ENCODE measurements at regions of chr2 and their contacts with region 1.

Region 1: GRCh38 chr2:172102391-172103278 is at the start of gene DLX2:
- H3K4me3 ChIP-seq: peak within 1 kb of the TSS; percentile 67
- H3K27ac ChIP-seq: peak within 1 kb of the TSS; percentile 99
- H3K4me1 ChIP-seq: peaks cover 14% of the 10 kb centered on the region
- CTCF ChIP-seq: peak; percentile 57; the same call in 1 of the 2 replicates

Region 2: GRCh38 chr2:171703574-171704347 is 398.9 kb before region 1 on chr2:
- CTCF ChIA-PET with region 1: interaction called, 14 read pairs
- POLR2A ChIA-PET with region 1: interaction called, 7 read pairs
- H3K4me3 ChIP-seq: no peak overlapping the region
- H3K27ac ChIP-seq: no peak overlapping the region
- H3K4me1 ChIP-seq: peaks cover 5% of the 10 kb centered on the region
- CTCF ChIP-seq: 0 out of 2 replicates have a peak, but pooled peaks have one; percentile 27

Region 3: DNA sequence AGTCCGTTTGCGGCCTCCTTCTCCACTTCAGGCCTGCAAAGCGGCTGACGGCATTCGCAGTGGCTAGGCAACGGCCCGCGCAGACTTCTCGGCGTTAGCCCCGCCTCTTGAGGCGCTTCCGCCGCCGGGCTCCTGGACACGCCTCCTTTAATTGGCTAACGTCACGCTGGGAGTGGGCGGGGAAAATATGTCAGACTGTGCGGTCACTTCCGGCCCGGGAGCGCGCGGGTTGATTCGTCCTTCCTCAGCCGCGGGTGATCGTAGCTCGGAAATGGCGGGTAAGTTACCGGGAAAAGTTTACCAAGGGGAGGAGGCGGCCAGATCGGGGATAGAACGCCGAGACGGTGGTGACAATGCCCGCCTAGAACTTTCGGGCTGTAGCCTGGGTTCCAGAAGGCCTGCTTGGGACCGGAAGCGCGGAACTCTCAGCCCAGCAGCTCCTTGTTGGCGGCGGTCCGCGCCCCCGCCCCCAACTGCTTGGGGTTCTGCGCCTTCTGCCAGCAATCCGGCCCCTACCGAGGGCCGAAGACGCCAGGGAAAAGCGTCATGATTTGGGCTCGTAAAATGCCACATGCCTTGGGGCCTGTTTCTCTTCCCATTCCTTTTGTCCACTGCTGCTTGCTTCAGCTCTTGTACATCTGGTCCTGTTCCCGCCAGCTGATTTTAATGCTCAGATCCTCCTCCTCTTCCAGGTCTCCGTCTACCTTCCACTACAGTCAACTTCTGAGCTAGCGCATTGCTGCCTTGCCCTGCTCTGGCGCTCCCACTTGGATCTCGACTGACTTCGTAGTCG is 180.2 kb before region 1 on chr2 and contains the start of gene HAT1:
- CTCF ChIA-PET with region 1: interaction called, 3 read pairs
- POLR2A ChIA-PET with region 1: interaction called, 82 read pairs
- H3K4me3 ChIP-seq: peak within 1 kb of the TSS; percentile 84
- H3K27ac ChIP-seq: peak within 1 kb of the TSS; percentile 91
- H3K4me1 ChIP-seq: peaks cover 2% of the 10 kb centered on the region
- CTCF ChIP-seq: peak; percentile 32

Region 4: GRCh38 chr2:172038604-172039003 is 64.0 kb before region 1 on chr2:
- CTCF ChIA-PET with region 1: interaction called, 3 read pairs
- POLR2A ChIA-PET with region 1: interaction called, 17 read pairs
- H3K4me3 ChIP-seq: no peak overlapping the region
- H3K27ac ChIP-seq: peak overlapping the region; percentile 53
- H3K4me1 ChIP-seq: peaks cover 11% of the 10 kb centered on the region
- CTCF ChIP-seq: no peak

Region 5: GRCh38 chr2:172113617-172114016 is 11.0 kb after region 1 on chr2:
- CTCF ChIA-PET with region 1: interaction called, 13 read pairs
- POLR2A ChIA-PET with region 1: interaction called, 5 read pairs
- H3K4me3 ChIP-seq: no peak overlapping the region
- H3K27ac ChIP-seq: no peak overlapping the region
- H3K4me1 ChIP-seq: no peaks in the 10 kb centered on the region
- CTCF ChIP-seq: peak; percentile 79

Region 6: GRCh38 chr2:172200495-172201085 is 98.0 kb after region 1 on chr2:
- CTCF ChIA-PET with region 1: no interaction called
- POLR2A ChIA-PET with region 1: no interaction called
- H3K4me3 ChIP-seq: no peak overlapping the region
- H3K27ac ChIP-seq: no peak overlapping the region
- H3K4me1 ChIP-seq: no peaks in the 10 kb centered on the region
- CTCF ChIP-seq: no peak